Mammary epithelial cell (primary cell): ENCODE measurements at regions of chr7 and their contacts with region 1.

Region 1: DNA sequence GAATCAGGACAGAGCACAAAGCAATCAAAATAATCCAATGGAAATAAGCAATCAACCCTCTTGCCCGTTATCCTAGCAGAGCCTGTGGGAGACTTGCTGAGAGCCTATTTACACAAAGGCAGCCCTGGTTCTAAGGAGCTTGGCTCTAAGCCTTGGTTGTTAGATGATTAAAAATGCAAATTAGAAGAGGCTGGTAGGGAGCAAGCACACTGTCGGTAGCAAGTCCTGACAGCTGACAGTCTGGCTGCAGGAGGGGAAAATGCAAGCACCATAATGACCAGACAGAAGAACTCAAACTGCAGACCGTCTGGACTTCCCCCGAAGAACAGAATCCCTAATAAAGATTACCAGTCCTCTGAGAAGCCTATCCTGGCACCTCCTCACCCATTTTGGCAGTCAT is 131.8 kb upstream of the CTTNBP2 start:
- DNase-seq: no peak
- H3K4me3 ChIP-seq: no peak overlapping the region
- H3K27ac ChIP-seq: no peak overlapping the region
- H3K4me1 ChIP-seq: peaks cover 12% of the 10 kb centered on the region
- H3K27me3 ChIP-seq: no peaks in the 10 kb centered on the region
- CTCF ChIP-seq: no peak

Region 2: GRCh38 chr7:117837841-117838240 is 167.2 kb before region 1 on chr7:
- CTCF ChIA-PET with region 1: no interaction called
- dilution Hi-C with region 1: no loop called
- in situ Hi-C with region 1: no loop called
- intact Hi-C with region 1: no loop called
- DNase-seq: no peak
- H3K4me3 ChIP-seq: no peak overlapping the region
- H3K27ac ChIP-seq: no peak overlapping the region
- H3K4me1 ChIP-seq: no peaks in the 10 kb centered on the region
- H3K27me3 ChIP-seq: no peaks in the 10 kb centered on the region
- CTCF ChIP-seq: no peak

Region 3: GRCh38 chr7:118057404-118057803 is 52.4 kb after region 1 on chr7:
- CTCF ChIA-PET with region 1: no interaction called
- dilution Hi-C with region 1: loop called (anchors 10 kb)
- in situ Hi-C with region 1: no loop called
- intact Hi-C with region 1: no loop called
- DNase-seq: peak; percentile 94
- H3K4me3 ChIP-seq: no peak overlapping the region
- H3K27ac ChIP-seq: peak overlapping the region; percentile 68
- H3K4me1 ChIP-seq: peaks cover 19% of the 10 kb centered on the region
- H3K27me3 ChIP-seq: no peaks in the 10 kb centered on the region
- CTCF ChIP-seq: no peak